SK-N-SH (cell line): ENCODE measurements at regions of chr2 and their contacts with region 1.

Region 1: DNA sequence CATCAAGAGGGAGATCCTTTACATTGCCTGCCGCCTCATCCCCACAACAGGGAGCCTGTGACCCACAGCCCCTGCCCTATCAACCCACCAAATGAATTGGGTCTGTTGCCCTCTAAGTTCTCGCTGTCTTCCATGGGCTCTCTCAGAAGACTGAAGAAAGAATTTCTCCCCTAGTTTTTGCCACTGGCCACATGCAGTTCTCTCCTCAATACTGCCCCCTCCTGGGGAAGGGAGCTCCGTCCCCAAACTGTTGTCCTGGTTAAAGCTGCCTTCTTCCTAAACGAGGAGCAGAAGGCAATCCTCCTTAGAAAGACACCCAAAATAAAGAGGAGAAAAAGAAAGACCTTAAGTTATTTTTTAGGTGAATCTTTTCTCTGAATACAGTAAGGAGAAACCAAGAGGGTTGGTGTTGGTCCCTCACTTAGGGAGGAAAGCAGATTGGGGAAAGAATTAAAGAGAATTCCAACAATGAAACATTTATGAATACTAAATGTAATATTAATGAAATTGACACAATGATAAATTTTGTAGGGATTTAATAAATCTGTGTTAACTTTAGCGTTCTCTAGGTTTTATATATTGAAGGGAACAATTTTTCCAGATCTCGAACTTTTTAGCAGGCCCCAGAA is 31.1 kb upstream of the SATB2 start:
- DNase-seq: peak; percentile 59
- H3K4me3 ChIP-seq: no peak overlapping the region
- H3K27ac ChIP-seq: no peak overlapping the region
- H3K4me1 ChIP-seq: no peaks in the 10 kb centered on the region
- H3K27me3 ChIP-seq: peaks cover 5% of the 10 kb centered on the region; the same call in 1 of the 2 replicates
- CTCF ChIP-seq: peak; percentile 76
- EP300 ChIP-seq: no peak
- RAD21 ChIP-seq: peak; percentile 52

Region 2: DNA sequence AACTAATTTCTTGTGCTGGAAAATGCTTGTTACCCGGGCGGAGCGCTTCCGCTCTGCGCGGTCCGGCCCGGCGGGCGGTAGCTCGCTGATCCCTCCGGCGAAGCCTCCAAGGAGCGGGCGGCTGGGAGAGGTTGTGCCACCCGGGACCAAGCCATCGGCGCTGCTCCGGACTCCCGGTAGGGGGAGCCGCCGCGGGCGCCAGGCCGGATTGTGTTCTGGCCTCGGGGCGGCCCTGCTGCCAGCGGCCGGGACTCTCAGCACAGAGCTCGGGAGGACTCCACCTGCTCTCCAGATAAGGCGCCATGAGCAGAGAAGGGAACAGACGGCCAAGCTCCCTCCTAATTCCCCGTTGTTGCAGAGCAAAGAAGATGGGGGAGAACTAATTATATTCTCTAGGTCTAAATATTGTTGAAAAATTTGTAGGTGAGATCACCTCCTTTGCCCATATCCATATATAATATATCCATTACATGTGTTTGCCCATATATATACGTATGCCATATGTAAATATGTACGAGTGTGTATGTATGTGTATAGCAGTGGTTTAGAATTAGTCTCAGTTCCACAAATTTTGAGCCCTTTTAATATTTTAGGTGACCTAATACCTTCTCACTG is 17.3 kb before region 1 on chr2:
- CTCF ChIA-PET with region 1: interaction called, 26 read pairs
- POLR2A ChIA-PET with region 1: no interaction called
- DNase-seq: peak; percentile 74
- H3K4me3 ChIP-seq: peak overlapping the region in 1 of 2 experiments; percentile 39; a peak in 1 of 4 replicates
- H3K27ac ChIP-seq: no peak overlapping the region
- H3K4me1 ChIP-seq: no peaks in the 10 kb centered on the region
- H3K27me3 ChIP-seq: peaks cover 72% of the 10 kb centered on the region
- CTCF ChIP-seq: peak; percentile 68
- EP300 ChIP-seq: no peak
- RAD21 ChIP-seq: no peak

Region 3: DNA sequence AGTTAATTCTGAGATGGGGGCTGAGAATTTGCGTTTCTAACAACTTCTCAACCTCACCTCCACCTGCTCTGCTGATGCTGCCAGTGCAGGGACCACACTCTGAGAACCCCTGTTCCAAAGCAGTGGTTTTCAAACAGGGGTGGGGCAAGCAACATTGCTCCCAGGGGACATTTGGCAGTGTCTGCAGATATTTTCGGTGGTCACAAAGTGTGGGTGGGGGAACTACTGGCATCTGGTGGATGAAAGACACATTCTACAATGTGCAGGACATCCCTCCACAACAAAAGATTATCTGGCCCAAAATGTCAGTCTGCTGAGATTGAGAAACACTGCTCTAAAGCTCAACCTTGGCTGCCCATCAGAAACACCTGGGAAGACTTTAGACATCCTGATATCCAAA is 157.6 kb after region 1 on chr2:
- CTCF ChIA-PET with region 1: no interaction called
- POLR2A ChIA-PET with region 1: no interaction called
- DNase-seq: no peak
- H3K4me3 ChIP-seq: no peak overlapping the region
- H3K27ac ChIP-seq: no peak overlapping the region
- H3K4me1 ChIP-seq: no peaks in the 10 kb centered on the region
- H3K27me3 ChIP-seq: no peaks in the 10 kb centered on the region
- CTCF ChIP-seq: no peak
- EP300 ChIP-seq: no peak
- RAD21 ChIP-seq: no peak